Activated CD4-positive, alpha-beta memory T cell treated with anti-CD3 and anti-CD28 coated beads, Interleukin-2, amount 10 ng/mL, durations not matched to agents 7 days and 5 days (primary cell): ENCODE measurements at regions of chr16 and their contacts with region 1.

Region 1: DNA sequence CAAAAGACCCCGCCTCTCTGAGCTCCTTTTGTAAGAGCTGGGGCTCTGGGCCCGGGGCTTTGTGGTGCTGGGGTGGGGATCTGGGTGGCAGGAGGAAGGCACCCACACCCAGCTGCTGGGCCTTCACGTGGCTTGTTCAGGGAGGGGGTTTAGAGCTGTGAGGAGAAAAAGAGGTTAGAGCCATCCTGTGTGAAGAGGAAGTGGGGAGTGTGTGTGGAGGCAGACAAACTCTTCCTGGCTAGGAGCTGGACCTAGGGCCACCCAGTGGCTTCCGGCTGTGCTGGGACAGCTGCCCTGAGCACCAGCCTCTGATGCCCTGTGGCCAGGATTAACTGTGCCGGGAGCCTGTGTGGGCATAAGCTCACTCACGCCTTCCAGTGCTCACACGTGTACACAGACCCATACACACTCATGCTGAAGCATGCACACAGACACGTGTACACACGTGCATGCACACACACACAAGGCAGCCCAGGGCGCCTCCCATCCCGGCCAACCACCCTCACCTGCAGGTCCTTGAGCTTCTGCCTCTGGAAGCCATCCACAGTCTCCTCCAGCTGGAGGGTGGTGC is 7.4 kb downstream of the CIBAR2 start:
- DNase-seq: peak; percentile 52
- H3K4me3 Mint-ChIP-seq: no peak overlapping the region
- H3K27ac Mint-ChIP-seq: peak overlapping the region; percentile 60
- H3K4me1 Mint-ChIP-seq: peaks cover 28% of the 10 kb centered on the region
- H3K27me3 Mint-ChIP-seq: no peaks in the 10 kb centered on the region

Region 2: DNA sequence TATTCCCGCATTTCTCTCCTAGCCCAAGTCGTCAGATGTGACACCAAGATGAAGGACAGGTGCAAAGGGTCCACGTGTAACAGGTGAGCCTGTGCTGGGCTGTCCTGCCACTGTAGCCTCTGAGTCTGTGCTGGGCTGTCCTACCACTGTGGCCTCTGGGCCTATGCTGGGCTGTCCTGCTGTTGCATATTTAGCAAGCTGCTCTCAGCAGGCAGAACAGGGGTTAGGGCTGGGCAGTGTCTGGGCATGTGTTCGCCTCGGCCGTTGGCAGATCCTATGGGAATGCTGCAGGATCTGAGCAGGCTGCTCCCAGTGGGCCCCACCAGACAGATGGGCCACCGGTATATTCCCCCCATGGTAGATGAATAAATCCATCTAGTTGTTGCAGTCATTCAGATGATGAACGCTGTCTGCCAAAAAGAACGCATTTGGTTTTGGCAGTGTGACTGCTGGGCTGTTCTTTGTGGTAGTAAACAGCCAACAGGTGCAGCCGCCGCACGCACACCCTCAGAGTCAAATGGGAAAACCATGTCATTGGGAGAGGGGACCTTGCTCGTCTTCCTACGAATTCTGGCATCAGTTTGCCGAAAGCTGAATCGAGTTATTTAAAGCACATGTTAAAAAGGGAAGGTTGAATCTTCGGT is 236.0 kb before region 1 on chr16:
- CTCF ChIA-PET with region 1: no interaction called
- POLR2A ChIA-PET with region 1: no interaction called
- DNase-seq: no peak
- H3K4me3 Mint-ChIP-seq: no peak overlapping the region
- H3K27ac Mint-ChIP-seq: no peak overlapping the region
- H3K4me1 Mint-ChIP-seq: no peaks in the 10 kb centered on the region
- H3K27me3 Mint-ChIP-seq: peaks cover 2% of the 10 kb centered on the region

Region 3: DNA sequence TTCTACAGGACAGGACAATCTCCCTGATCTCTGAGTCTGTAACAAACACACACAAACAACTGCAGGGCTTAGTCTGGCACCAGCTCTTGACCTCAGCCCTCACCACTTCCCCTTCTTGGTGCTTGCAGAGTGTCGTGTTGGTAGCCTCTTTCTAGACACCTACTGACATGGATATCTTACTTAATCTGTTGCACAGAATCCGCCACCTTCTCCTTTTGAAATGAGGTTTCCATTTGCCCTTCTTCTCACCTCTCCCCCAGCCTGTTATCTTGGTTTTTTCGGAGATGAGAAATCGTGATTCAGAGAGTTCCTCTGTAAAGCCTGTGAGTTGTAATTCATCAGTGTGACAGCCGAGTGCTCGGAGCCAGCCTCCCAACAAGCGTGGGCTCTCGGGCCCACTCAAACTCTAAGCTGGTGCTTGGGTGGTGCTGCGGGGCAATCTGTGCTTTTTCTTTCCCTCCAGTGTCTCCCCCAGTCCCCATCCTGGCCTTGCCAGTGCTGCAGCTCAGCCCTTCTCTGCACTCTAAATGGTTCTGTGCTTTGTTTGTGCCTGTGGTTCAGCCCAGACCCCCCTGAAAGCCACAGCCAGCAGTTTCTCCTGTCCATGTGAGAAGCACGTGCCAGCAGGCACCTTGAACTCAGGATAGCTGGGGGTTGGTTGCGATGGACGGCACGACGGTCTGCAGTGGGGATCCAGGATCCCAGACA is 49.2 kb before region 1 on chr16:
- CTCF ChIA-PET with region 1: no interaction called
- POLR2A ChIA-PET with region 1: interaction called, 11 read pairs
- DNase-seq: peak; percentile 92
- H3K4me3 Mint-ChIP-seq: peak overlapping the region; percentile 21
- H3K27ac Mint-ChIP-seq: peak overlapping the region; percentile 66
- H3K4me1 Mint-ChIP-seq: peaks cover 32% of the 10 kb centered on the region
- H3K27me3 Mint-ChIP-seq: peaks cover 12% of the 10 kb centered on the region

Region 4: DNA sequence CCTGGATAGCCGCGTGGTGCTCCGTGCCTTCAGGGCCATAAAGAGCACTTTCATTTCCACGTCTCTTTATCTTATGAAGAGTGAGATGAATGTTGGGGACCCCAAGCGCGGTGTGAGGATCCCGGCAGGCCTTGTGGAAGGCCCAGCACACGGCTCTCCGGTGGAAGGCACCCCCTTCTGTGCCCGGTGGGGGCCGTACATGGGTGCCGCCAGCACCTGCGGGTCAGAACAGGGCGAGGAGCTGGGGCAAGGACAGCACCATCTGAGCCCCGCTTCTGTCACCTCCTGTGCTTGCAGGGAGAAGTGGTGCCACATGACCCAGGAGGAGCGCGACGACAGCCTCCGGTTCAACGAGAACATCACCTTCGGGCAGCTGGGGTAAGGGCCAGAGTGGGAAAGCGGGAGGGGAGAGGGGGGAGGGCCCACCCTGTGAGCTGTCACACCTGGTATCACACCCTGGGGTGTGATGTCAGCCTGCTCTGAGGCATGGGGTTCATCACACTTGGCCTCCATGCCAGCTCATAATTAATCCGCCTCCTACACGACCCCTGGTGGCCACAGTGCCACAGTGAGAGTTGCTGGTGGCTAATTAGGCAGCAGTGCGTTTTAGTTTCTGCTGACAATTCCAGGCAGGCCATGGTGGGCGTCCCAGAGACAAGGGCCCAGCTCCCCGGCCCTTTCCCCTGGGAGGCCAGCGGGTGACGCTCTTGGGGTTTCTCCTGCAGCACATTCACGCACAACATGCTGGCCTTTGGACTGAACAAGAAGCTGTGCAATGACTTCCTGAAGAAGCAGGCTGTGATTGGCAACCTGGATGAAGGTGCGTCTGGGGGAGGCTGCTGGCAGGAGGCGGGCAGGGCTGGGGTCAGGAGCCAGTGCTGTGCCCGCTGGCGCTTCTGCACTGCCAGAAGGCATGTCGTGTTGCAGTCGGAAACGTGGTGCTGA is 18.3 kb before region 1 on chr16:
- CTCF ChIA-PET with region 1: interaction called, 13 read pairs
- POLR2A ChIA-PET with region 1: interaction called, 4 read pairs
- DNase-seq: peak; percentile 78
- H3K4me3 Mint-ChIP-seq: no peak overlapping the region
- H3K27ac Mint-ChIP-seq: no peak overlapping the region
- H3K4me1 Mint-ChIP-seq: no peaks in the 10 kb centered on the region
- H3K27me3 Mint-ChIP-seq: no peaks in the 10 kb centered on the region

Region 5: GRCh38 chr16:85114909-85115567 is 10.1 kb after region 1 on chr16:
- CTCF ChIA-PET with region 1: interaction called, 22 read pairs
- POLR2A ChIA-PET with region 1: no interaction called
- DNase-seq: peak; percentile 85
- H3K4me3 Mint-ChIP-seq: peak overlapping the region; percentile 58
- H3K27ac Mint-ChIP-seq: peak overlapping the region; percentile 66
- H3K4me1 Mint-ChIP-seq: peaks cover 10% of the 10 kb centered on the region
- H3K27me3 Mint-ChIP-seq: no peaks in the 10 kb centered on the region

Region 6: DNA sequence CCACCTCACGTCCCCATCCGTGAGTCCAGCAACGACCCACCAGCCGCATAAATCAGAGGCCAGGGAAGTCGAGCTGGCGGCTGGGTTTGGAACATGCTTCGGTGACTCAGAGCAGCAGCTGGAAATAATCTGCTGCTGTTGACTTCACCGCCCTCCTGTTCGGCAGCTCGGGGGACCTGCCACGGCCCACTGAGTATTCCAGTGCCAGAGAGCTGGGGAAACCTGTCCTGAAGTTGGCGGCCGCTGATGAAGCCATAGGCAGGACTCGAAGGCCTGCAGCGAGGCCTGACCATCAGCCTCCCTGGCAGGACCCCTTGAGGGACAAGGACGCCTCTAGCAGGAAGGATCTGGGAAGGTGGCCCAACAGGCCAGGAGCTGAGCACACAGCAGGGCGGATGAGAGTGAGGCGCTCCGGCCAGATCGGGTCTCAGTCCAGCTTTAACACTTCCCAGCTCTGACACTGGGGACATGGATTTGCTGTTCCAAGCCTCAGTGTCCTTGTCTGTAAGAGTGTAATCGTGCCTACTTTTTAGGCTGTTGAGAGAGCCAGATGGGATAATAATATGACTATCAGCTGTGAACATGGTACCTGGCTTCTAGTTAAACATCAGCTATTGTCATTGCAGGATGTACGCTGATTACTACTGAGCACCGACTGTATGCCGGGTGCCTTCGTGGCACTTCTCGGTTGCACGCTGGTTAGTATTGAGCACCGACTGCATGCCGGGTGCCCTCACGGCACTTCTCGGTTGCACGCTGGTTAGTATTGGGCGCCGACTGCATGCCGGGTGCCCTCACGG is 57.8 kb after region 1 on chr16:
- CTCF ChIA-PET with region 1: no interaction called
- POLR2A ChIA-PET with region 1: no interaction called
- DNase-seq: no peak
- H3K4me3 Mint-ChIP-seq: no peak overlapping the region
- H3K27ac Mint-ChIP-seq: no peak overlapping the region
- H3K4me1 Mint-ChIP-seq: peaks cover 6% of the 10 kb centered on the region
- H3K27me3 Mint-ChIP-seq: peaks cover 20% of the 10 kb centered on the region